GM12878 (cell line): ENCODE measurements at regions of chr6 and their contacts with region 1.

Region 1: GRCh38 chr6:28355743-28356665 is 6.3 kb downstream of the ZKSCAN3 start:
- DNase-seq: peak; percentile 55
- ATAC-seq: peak; percentile 93
- H3K4me3 ChIP-seq: peak overlapping the region; percentile 67; the same call in 1 of the 2 replicates
- H3K27ac ChIP-seq: peak overlapping the region; percentile 59
- H3K4me1 ChIP-seq: peaks cover 3% of the 10 kb centered on the region; the same call in 1 of the 2 replicates
- H3K27me3 ChIP-seq: no peaks in the 10 kb centered on the region
- CTCF ChIP-seq: peak; percentile 71 to 76 (median 72)
- EP300 ChIP-seq: no peak
- POLR2A ChIP-seq: no peak
- RAD21 ChIP-seq: peak; percentile 88

Region 2: GRCh38 chr6:27809939-27810767 is 545.9 kb before region 1 on chr6:
- CTCF ChIA-PET with region 1: no interaction called
- POLR2A ChIA-PET with region 1: no interaction called
- RAD21 ChIA-PET with region 1: no interaction called
- SMC1A ChIA-PET with region 1: no interaction called
- in situ Hi-C with region 1: no loop called
- intact Hi-C with region 1: loop called (anchors 10 kb)
- DNase-seq: peak; percentile 98
- ATAC-seq: peak; percentile 43
- H3K4me3 ChIP-seq: peak overlapping the region; percentile 74
- H3K27ac ChIP-seq: peak overlapping the region; percentile 82
- H3K4me1 ChIP-seq: peaks cover 25% of the 10 kb centered on the region
- H3K27me3 ChIP-seq: no peaks in the 10 kb centered on the region
- CTCF ChIP-seq: peak in 1 of 3 experiments; percentile 19; a peak in 2 of 6 replicates
- EP300 ChIP-seq: no peak
- POLR2A ChIP-seq: peak; percentile 95
- RAD21 ChIP-seq: no peak

Region 3: DNA sequence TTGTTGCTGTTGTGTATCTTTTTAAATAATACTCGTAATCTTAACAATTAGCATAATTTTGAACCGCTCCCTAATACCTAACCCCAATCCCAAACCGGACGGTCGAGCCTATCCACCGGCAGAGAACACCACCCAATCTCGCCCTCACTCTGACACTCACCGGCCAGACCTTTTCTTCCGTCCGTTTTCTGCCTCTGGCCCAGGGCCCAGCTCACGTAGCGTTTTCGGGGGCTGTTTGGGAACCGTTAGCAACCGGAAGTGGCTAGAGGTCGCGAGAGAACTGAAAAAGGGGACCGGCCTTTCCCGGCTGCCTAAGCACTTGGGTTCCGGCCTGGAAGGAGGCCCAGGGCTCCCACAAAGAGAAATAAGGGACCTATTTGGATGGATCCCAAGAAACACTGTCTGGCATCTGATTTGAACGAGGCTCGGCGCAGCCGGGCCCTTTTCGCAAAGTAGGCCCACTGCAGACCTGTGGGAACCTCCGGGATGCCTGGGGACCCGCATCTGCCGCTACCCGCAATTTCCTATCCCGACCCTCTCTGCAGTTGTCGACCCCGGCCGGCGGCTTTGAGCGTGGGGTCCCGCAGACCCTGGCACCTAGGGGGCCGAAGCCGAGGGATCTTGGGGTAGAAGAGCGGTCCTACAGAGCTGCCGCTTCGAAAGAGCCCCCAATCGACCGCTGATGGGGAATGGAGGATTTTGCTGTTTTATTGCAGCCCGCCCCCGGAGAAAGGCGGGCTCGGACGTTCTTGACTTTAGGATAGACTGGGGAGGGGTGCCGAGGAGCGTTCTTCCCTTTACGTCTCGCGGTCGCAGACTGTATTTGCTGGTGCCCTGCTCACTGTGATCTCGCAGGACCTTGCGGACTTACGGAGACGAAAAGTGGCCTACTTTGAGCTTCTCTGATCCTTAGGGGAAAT is 219.2 kb before region 1 on chr6:
- CTCF ChIA-PET with region 1: interaction called, 41 read pairs
- POLR2A ChIA-PET with region 1: no interaction called
- RAD21 ChIA-PET with region 1: interaction called, 17 read pairs
- SMC1A ChIA-PET with region 1: interaction called, 24 read pairs
- in situ Hi-C with region 1: loop called (anchors 5 kb)
- intact Hi-C with region 1: loop called (anchors 1 kb)
- DNase-seq: peak; percentile 56
- ATAC-seq: peak; percentile 77
- H3K4me3 ChIP-seq: peak overlapping the region; percentile 88
- H3K27ac ChIP-seq: peak overlapping the region; percentile 92
- H3K4me1 ChIP-seq: peaks cover 20% of the 10 kb centered on the region
- H3K27me3 ChIP-seq: no peaks in the 10 kb centered on the region
- CTCF ChIP-seq: no peak
- EP300 ChIP-seq: peak in 1 of 2 experiments; percentile 57; a peak in 1 of 4 replicates
- POLR2A ChIP-seq: peak; percentile 89
- RAD21 ChIP-seq: peak; percentile 25; the same call in 1 of the 2 replicates

Region 4: DNA sequence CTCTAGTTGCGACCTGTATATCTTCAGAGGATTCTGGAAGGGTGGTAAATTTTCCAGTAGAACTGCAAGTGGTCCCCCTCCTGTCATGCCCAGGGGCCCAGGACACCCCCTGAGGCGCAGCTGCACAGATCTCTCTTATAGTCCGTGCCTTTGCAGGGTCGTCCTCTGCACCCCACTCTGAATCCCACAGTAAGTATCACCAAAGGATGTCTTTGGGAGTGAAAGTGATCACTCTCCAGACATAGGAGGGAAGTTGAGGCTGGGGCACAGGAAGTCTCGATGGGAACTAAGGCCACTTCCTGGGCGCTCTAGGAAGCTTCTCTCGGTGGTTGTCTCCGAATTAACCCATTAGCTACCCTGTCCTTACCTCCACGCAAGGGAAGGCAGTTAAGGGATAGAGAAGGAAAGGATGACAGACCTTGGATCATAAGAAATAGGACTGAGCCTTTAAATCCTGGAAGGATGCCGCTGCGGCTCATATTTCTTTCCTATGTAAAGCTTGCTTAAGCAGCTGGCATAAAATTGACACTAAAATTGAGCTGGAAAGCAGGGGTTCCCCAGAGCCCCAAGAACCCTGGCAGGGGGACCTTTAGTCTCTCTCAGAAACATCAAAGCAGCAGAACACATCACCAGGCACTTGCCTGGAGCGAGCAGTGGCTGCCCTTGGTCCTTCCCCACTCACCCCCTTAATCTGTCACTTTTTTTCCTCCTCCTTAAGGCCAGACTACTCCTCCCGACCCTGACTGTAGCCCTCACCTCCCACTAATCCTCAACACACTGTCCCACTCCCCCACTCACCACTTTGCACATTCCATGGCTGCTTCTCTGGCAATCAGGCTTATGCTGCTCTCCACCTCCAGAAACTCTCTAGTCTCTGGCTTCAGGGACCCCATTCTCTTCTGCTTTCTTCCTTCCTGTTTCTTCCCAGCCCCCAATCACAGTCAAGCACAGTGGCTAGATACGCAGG is 103.7 kb before region 1 on chr6 and contains the start of gene ZKSCAN4:
- CTCF ChIA-PET with region 1: interaction called, 10 read pairs
- POLR2A ChIA-PET with region 1: no interaction called
- RAD21 ChIA-PET with region 1: interaction called, 6 read pairs
- SMC1A ChIA-PET with region 1: interaction called, 9 read pairs
- in situ Hi-C with region 1: no loop called
- intact Hi-C with region 1: no loop called
- DNase-seq: peak; percentile 67
- ATAC-seq: peak; percentile 93
- H3K4me3 ChIP-seq: peak within 1 kb of the TSS; percentile 99
- H3K27ac ChIP-seq: peak within 1 kb of the TSS; percentile 55
- H3K4me1 ChIP-seq: no peaks in the 10 kb centered on the region
- H3K27me3 ChIP-seq: no peaks in the 10 kb centered on the region
- CTCF ChIP-seq: no peak
- EP300 ChIP-seq: no peak
- POLR2A ChIP-seq: peak; percentile 52
- RAD21 ChIP-seq: peak; percentile 35
- polyA plus RNA-seq, gene ZKSCAN4: 3.0 to 3.3 TPM

Region 5: GRCh38 chr6:28335564-28336283 is 20.3 kb before region 1 on chr6 and contains the start of gene ZSCAN31:
- CTCF ChIA-PET with region 1: interaction called, 50 read pairs
- POLR2A ChIA-PET with region 1: no interaction called
- RAD21 ChIA-PET with region 1: interaction called, 4 read pairs
- SMC1A ChIA-PET with region 1: interaction called, 22 read pairs
- in situ Hi-C with region 1: no loop called
- intact Hi-C with region 1: no loop called
- DNase-seq: peak; percentile 73
- ATAC-seq: peak; percentile 96
- H3K4me3 ChIP-seq: peak within 1 kb of the TSS; percentile 72
- H3K27ac ChIP-seq: peak within 1 kb of the TSS; percentile 97
- H3K4me1 ChIP-seq: peaks cover 14% of the 10 kb centered on the region
- H3K27me3 ChIP-seq: no peaks in the 10 kb centered on the region
- CTCF ChIP-seq: no peak
- EP300 ChIP-seq: no peak
- POLR2A ChIP-seq: peak; percentile 85
- RAD21 ChIP-seq: no peak
- polyA plus RNA-seq, gene ZSCAN31: 1.6 to 2.0 TPM